AG04449 (cell line): ENCODE measurements at regions of chr16 and their contacts with region 1.

Region 1: DNA sequence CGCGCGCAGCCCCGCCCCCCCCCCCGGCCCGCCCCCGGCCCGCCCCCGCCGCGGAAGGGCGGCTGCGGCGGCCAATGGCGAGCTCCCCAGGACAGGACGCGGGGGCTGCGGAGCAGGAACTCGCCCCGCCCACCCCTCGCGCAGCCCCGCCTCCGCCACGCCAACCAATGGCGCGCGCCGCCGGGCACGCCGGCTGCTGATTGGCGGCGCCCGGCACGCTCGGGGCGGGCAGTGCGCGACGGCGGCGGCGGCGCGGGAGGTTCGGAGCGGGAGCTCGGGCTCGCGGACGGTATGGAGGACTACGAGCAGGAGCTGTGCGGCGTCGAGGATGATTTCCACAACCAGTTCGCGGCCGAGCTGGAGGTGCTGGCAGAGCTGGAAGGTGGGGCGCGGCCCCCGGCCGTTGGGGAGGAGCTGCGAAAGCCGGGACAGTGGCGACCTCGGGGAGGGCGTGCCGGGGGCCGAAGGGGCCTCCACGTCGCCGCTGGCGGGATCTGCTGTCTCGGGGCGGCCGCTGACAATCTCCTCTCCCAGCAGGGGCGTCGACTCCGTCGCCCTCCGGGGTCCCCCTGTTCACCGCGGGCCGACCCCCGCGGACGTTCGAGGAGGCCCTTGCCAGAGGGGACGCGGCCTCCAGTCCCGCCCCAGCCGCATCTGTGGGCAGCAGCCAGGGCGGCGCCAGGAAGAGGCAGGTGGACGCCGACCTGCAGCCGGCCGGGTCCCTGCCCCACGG is at the start of gene CHTF18:
- DNase-seq: peak; percentile 4
- H3K4me3 ChIP-seq: peak within 1 kb of the TSS; percentile 88
- CTCF ChIP-seq: no peak

Region 2: DNA sequence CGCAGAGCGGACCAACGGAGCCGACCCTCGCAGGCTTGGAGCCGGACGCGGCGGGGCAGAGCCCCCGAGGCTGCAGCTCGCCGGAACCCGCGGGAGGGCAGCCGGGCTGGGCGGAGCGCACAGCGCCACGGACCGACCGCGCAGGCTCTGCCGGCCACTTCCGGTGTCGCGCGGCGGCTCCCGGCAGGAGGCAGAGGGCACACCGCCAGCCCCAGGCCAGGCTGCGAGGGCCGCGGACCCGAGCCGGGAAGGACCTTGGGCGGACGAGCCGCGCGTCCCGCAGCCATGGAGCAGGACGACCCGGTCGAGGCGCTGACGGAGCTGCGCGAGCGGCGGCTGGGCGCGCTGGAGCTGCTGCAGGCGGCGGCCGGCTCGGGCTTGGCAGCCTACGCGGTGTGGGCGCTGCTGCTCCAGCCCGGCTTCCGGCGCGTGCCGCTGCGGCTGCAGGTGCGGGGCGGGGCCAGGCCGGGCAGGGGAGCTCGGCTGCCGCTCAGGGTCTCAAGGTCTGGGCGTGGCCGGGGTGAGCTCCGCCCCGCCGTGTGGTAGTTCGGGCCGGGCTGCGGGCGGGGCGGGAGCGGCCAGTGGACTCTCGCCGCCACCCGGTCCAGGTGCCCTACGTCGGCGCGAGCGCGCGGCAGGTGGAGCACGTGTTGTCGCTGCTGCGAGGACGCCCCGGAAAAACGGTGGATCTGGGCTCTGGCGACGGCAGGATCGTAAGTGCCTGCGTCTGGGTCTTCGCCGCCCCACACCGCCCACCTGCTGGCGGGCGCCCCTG is 67.4 kb before region 1 on chr16 and contains the start of gene ANTKMT:
- CTCF ChIA-PET with region 1: interaction called, 210 read pairs
- POLR2A ChIA-PET with region 1: interaction called, 3 read pairs
- DNase-seq: no peak
- H3K4me3 ChIP-seq: peak within 1 kb of the TSS; percentile 75
- CTCF ChIP-seq: no peak

Region 3: GRCh38 chr16:749001-749400 is 39.6 kb before region 1 on chr16:
- CTCF ChIA-PET with region 1: interaction called, 15 read pairs
- POLR2A ChIA-PET with region 1: no interaction called
- DNase-seq: peak; percentile 57
- H3K4me3 ChIP-seq: no peak overlapping the region
- CTCF ChIP-seq: no peak